ENCODE measurements at regions of chr19 and their contacts with region 1.

Region 1: GRCh38 chr19:33143897-33144405 is 12.0 kb downstream of the WDR88 start:
- DNase-seq: peak; percentile 47
- ATAC-seq: peak; percentile 92
- H3K4me3 ChIP-seq: peak overlapping the region; percentile 57 to 72 (median 57); a peak in 5 of 6 replicates
- H3K27ac ChIP-seq: no peak overlapping the region
- H3K4me1 ChIP-seq: peaks cover 30% of the 10 kb centered on the region
- H3K27me3 ChIP-seq: peaks cover 0 to 7% of the 10 kb centered on the region in 2 experiments; a peak in 2 of 5 replicates
- CTCF ChIP-seq: peak; percentile 95
- EP300 ChIP-seq: no peak
- POLR2A ChIP-seq: no peak
- RAD21 ChIP-seq: peak; percentile 88

Region 2: DNA sequence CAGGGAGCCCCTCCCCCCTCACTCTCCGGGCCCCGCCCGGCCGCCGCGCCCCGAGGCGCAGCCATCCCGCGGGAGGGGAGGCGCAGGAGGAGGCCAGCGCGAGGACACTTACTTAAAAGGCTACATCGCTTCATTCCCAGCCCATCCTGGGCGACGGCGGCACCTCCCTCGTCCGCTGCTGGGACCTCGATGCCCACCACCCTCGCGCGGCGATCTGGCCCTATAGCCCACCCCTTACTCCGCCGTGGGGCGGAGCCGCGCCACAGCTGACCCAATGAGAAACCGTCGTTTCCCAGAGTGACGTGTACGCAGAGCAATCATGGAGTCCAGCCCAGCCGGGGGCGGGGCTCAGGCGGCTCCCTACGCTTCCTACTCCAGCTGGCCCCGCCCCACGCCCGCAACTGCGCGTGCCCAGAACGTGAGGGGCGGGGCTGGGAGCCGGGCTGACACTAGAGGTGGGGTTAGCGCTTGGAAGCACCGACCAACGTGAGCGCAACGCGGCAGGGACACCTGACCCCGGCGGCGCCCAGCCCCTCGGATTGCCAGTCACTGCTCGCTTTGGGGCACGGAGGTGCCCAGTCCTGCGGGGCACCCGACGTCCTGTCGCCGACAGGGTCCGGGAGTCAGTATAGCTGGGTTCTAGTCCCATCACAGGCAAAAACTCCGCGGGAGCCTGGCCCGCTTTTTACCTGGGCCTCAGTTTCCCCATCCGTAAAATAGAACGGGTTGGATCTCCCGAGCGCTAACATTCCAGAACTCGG is 468.8 kb before region 1 on chr19 and contains the start of gene ANKRD27:
- CTCF ChIA-PET with region 1: no interaction called
- POLR2A ChIA-PET with region 1: no interaction called
- in situ Hi-C with region 1: loop called (anchors 25 kb)
- intact Hi-C with region 1: no loop called
- DNase-seq: peak; percentile 96
- ATAC-seq: peak; percentile 93
- H3K4me3 ChIP-seq: peak within 1 kb of the TSS; percentile 74 to 88 (median 85)
- H3K27ac ChIP-seq: peak within 1 kb of the TSS; percentile 51
- H3K4me1 ChIP-seq: peaks cover 64% of the 10 kb centered on the region
- H3K27me3 ChIP-seq: peaks cover 3 to 15% of the 10 kb centered on the region in 2 experiments; a peak in 4 of 5 replicates
- CTCF ChIP-seq: no peak
- EP300 ChIP-seq: no peak
- POLR2A ChIP-seq: peak; percentile 57 to 87; a peak in 3 of 4 replicates
- RAD21 ChIP-seq: no peak
- total RNA-seq, gene ANKRD27: 23.7 and 30.6 TPM in 2 replicates

Region 3: DNA sequence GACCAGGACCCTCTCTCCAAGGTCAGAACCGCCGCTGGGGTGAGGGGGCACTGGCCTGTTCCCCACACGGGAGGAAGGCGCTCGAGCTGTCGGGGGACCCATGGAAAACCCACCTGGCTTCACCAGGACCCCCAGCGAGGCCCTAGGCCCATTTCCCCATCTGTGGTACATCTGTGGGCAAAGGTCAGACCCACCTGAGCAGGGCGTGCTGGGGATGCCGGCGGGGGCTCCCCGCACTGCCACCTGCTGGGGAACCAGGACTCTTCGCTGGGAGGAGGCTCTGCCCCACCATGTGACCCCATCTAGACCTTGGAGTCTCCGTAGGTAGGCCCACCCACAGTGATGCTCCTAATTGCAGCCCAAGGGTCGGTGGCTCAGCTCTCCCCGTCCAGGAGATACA is 11.5 kb before region 1 on chr19:
- CTCF ChIA-PET with region 1: no interaction called
- POLR2A ChIA-PET with region 1: no interaction called
- in situ Hi-C with region 1: no loop called
- intact Hi-C with region 1: no loop called
- DNase-seq: no peak
- ATAC-seq: peak; percentile 80
- H3K4me3 ChIP-seq: no peak overlapping the region
- H3K27ac ChIP-seq: no peak overlapping the region
- H3K4me1 ChIP-seq: peaks cover 12% of the 10 kb centered on the region
- H3K27me3 ChIP-seq: no peaks in the 10 kb centered on the region; a peak in 1 of 5 replicates
- CTCF ChIP-seq: peak; percentile 66
- EP300 ChIP-seq: no peak
- POLR2A ChIP-seq: no peak
- RAD21 ChIP-seq: 0 out of 2 replicates have a peak, but pooled peaks have one; percentile 15

Region 4: GRCh38 chr19:33176670-33177416 is 32.9 kb after region 1 on chr19:
- CTCF ChIA-PET with region 1: interaction called, 9 read pairs
- POLR2A ChIA-PET with region 1: interaction called, 18 read pairs
- in situ Hi-C with region 1: loop called (anchors 5 kb)
- intact Hi-C with region 1: loop called (anchors 2 kb)
- DNase-seq: peak; percentile 97
- ATAC-seq: peak; percentile 90
- H3K4me3 ChIP-seq: peak overlapping the region; percentile 80 to 97 (median 86)
- H3K27ac ChIP-seq: peak overlapping the region; percentile 92
- H3K4me1 ChIP-seq: peaks cover 59% of the 10 kb centered on the region
- H3K27me3 ChIP-seq: peaks cover 0 to 9% of the 10 kb centered on the region in 2 experiments; a peak in 1 of 5 replicates
- CTCF ChIP-seq: no peak
- EP300 ChIP-seq: 0 out of 4 replicates have a peak, but pooled peaks of 1 of the 2 experiments have one; percentile 13
- POLR2A ChIP-seq: peak; percentile 98 to 99
- RAD21 ChIP-seq: no peak; the same call in none of the 2 replicates

Region 5: DNA sequence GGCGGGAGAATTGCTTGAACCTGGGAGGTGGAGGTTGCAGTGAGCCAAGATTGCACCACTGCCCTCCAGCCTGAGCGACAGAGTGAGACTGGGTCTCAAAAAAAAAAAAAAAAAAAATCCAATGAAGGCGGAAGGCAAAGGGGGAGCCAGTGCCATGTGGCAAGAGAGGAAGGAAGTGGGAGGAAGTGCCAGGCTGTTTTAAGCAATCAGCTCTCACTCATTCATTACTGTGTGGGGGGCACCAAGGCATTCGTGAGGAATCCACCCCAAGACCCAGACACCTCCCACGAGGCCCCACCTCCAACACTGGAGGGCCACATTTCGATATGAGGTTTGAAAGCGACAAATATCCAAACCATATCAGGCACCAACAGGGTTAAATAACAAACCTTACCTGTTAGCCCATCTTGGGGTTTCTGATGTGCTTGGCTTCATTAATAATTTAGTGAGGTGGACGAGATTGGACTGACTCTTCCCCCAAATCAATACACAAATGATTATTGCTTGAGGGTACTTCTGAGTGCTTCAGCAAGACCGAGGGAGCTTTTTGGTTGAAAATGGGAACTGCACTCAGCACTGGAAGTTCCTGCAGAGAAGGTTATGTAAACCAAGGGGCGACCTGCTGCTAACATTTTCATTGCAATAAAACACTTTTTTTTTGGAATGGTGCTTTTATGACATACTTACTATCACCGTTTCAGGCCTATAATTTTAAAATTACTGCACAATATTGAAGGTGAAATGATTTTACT is 42.7 kb after region 1 on chr19:
- CTCF ChIA-PET with region 1: interaction called, 16 read pairs
- POLR2A ChIA-PET with region 1: interaction called, 4 read pairs
- in situ Hi-C with region 1: no loop called
- intact Hi-C with region 1: loop called (anchors 1 kb)
- DNase-seq: no peak
- ATAC-seq: no peak
- H3K4me3 ChIP-seq: no peak overlapping the region
- H3K27ac ChIP-seq: no peak overlapping the region
- H3K4me1 ChIP-seq: no peaks in the 10 kb centered on the region
- H3K27me3 ChIP-seq: peaks cover 2 to 9% of the 10 kb centered on the region in 2 experiments; a peak in 1 of 5 replicates
- CTCF ChIP-seq: no peak
- EP300 ChIP-seq: no peak
- POLR2A ChIP-seq: no peak
- RAD21 ChIP-seq: no peak

Region 6: DNA sequence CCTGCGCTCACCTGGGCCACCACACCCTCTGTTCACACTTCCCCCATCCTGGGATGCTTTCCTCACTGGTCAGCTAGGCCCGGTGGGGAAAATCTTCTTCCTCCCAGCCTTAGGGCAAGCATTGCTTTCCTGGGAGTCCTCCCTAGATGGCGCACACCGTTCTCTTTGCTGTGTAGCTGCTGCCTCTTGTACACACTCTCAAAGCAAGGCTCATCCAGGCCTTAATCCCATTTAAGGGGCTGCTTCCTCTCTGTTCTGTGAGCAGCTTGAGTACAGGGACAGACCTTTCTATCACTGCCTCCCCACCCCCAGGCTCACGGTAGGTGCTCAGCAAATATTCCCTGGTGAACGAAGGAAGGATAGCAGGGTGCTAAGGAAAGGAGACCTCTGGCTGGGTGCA is 70.6 kb after region 1 on chr19:
- CTCF ChIA-PET with region 1: no interaction called
- POLR2A ChIA-PET with region 1: no interaction called
- in situ Hi-C with region 1: no loop called
- intact Hi-C with region 1: no loop called
- DNase-seq: peak; percentile 41
- ATAC-seq: peak; percentile 62
- H3K4me3 ChIP-seq: no peak overlapping the region
- H3K27ac ChIP-seq: no peak overlapping the region
- H3K4me1 ChIP-seq: peaks cover 41% of the 10 kb centered on the region
- H3K27me3 ChIP-seq: peaks cover 7 to 18% of the 10 kb centered on the region in 2 experiments; a peak in 4 of 5 replicates
- CTCF ChIP-seq: peak; percentile 73
- EP300 ChIP-seq: no peak
- POLR2A ChIP-seq: no peak
- RAD21 ChIP-seq: no peak